Kidney (tissue), 22 donors: ENCODE measurements at regions of chr7 and their contacts with region 1.

Region 1: GRCh38 chr7:47088329-47089067 is 493.4 kb downstream of the TNS3 start:
- DNase-seq: peak; percentile 72 to 86 (median 76)
- H3K4me3 ChIP-seq: no peak overlapping the region
- H3K27ac ChIP-seq: no peak overlapping the region
- H3K4me1 ChIP-seq: peaks cover 0 to 6% (median 0%) of the 10 kb centered on the region in 3 donors
- H3K27me3 ChIP-seq: no peaks in the 10 kb centered on the region
- CTCF ChIP-seq: peak; percentile 94

Region 2: GRCh38 chr7:45923290-45923689 is 1165.2 kb before region 1 on chr7:
- intact Hi-C with region 1: loop called (anchors 10 kb)
- DNase-seq: peak; percentile 81 to 90 (median 89)
- H3K4me3 ChIP-seq: peak overlapping the region in 2 of 3 donors; percentile 59 to 64
- H3K27ac ChIP-seq: no peak overlapping the region
- H3K4me1 ChIP-seq: peaks cover under 1 to 21% (median 7%) of the 10 kb centered on the region in 3 donors
- H3K27me3 ChIP-seq: peaks cover 5% of the 10 kb centered on the region
- CTCF ChIP-seq: peak; percentile 80

Region 3: GRCh38 chr7:46391231-46392201 is 697.0 kb before region 1 on chr7:
- intact Hi-C with region 1: loop called (anchors 10 kb)
- DNase-seq: peak in 3 of 5 donors; percentile 49 to 87 (median 82)
- H3K4me3 ChIP-seq: no peak overlapping the region
- H3K27ac ChIP-seq: no peak overlapping the region
- H3K4me1 ChIP-seq: peaks cover 0 to 4% (median 3%) of the 10 kb centered on the region in 3 donors
- H3K27me3 ChIP-seq: no peaks in the 10 kb centered on the region
- CTCF ChIP-seq: no peak